ENCODE measurements at regions of chr1 and their contacts with region 1.

Region 1: DNA sequence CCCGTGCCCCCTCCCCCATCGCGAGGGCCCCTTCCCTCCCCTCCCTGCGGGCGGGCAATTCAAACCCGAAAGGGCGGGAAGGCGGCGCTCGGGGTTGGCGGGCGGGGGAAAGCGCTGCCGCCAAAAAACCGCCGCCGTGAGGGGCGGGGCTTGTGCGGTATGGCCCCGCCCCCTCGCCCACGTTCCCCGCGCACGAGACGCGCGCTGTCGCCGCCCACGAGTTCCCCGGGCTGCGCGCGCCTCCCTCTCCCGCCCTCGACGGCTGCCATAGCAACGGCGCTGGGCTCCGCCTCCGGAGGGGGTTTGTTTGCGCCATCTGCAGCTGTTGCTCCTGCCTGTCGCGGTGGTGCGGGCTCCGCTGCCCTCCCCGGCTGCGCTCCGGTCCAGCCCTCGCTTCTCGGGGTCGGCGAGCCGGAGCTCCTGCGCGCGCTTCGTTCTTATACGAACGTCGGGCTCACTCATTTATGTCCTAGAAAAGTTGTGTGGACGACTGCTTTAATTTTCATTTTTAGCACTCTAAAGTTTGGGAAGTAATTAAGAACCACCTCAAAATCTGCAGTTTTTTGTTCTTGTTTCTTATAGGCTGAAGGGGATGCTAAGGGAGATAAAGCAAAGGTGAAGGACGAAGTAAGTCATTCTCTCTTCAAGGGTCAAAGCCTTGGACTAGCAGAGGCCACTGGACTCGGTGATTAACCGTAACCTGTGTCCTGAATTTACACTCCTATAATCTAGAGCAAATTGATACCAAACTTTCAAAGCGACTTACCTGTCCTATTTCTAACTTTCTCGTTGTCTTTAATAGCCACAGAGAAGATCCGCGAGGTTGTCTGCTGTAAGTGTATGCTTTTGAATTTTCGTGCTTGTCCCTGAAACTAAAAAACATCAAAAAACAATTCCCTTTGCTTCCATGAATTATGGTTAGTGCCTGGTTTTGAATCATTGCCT is 933 bp downstream of the HMGN2 start:
- DNase-seq: peak; percentile 95
- H3K4me3 Mint-ChIP-seq: peak overlapping the region; percentile 89
- H3K27ac Mint-ChIP-seq: peak overlapping the region; percentile 53
- H3K4me1 Mint-ChIP-seq: peaks cover 64% of the 10 kb centered on the region
- H3K27me3 Mint-ChIP-seq: no peaks in the 10 kb centered on the region

Region 2: GRCh38 chr1:25168200-25169071 is 1304.7 kb before region 1 on chr1:
- intact Hi-C with region 1: no loop called
- DNase-seq: no peak
- H3K4me3 Mint-ChIP-seq: no peak overlapping the region
- H3K27ac Mint-ChIP-seq: no peak overlapping the region
- H3K4me1 Mint-ChIP-seq: no peaks in the 10 kb centered on the region
- H3K27me3 Mint-ChIP-seq: peaks cover 6% of the 10 kb centered on the region

Region 3: GRCh38 chr1:26111530-26112406 is 361.4 kb before region 1 on chr1 and contains the start of gene PDIK1L:
- intact Hi-C with region 1: loop called (anchors 1 kb)
- DNase-seq: peak; percentile 91
- H3K4me3 Mint-ChIP-seq: peak within 1 kb of the TSS; percentile 96
- H3K27ac Mint-ChIP-seq: peak within 1 kb of the TSS; percentile 92
- H3K4me1 Mint-ChIP-seq: peaks cover 36% of the 10 kb centered on the region
- H3K27me3 Mint-ChIP-seq: no peaks in the 10 kb centered on the region
- total RNA-seq, gene PDIK1L: 15.5 and 18.9 TPM in 2 replicates

Region 4: DNA sequence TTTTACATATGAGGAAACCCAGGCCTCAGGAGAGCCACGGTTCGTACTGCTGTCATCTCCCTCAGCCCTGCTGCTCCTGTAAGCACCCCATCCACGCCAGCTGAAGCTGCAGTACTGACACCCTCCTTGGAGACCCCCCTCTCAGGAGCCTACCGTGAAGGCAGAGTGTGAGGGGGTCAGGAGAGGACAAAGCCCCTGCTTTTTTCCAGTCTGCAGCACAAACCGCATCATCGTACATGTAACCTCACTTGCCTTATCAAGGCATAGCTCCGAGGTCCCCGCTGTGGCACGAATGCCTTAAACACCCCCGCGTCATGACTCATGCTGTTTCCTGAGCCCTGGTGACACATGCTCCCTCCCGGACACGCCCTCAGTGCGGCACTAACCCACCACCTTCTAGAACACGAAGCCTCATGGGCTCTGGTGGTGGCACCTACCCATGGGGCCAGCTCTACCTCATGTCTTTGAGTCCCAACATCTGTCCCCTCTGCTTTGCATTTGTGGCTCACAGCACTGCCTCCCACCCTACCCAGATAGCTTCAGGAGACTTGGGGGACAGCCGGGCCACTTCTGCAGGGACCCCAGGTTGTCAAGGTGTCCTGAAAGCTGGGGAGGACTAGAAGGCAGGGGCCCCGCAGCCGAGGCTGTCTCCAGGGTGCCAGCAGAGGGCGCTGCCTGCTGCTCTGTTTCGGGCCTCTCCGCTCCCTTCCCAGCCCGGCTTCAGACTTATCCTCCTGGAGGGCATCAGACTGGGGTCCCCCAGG is 188.4 kb before region 1 on chr1:
- intact Hi-C with region 1: loop called (anchors 1 kb)
- DNase-seq: peak; percentile 88
- H3K4me3 Mint-ChIP-seq: peak overlapping the region; percentile 81
- H3K27ac Mint-ChIP-seq: peak overlapping the region; percentile 97
- H3K4me1 Mint-ChIP-seq: peaks cover 70% of the 10 kb centered on the region
- H3K27me3 Mint-ChIP-seq: no peaks in the 10 kb centered on the region

Region 5: DNA sequence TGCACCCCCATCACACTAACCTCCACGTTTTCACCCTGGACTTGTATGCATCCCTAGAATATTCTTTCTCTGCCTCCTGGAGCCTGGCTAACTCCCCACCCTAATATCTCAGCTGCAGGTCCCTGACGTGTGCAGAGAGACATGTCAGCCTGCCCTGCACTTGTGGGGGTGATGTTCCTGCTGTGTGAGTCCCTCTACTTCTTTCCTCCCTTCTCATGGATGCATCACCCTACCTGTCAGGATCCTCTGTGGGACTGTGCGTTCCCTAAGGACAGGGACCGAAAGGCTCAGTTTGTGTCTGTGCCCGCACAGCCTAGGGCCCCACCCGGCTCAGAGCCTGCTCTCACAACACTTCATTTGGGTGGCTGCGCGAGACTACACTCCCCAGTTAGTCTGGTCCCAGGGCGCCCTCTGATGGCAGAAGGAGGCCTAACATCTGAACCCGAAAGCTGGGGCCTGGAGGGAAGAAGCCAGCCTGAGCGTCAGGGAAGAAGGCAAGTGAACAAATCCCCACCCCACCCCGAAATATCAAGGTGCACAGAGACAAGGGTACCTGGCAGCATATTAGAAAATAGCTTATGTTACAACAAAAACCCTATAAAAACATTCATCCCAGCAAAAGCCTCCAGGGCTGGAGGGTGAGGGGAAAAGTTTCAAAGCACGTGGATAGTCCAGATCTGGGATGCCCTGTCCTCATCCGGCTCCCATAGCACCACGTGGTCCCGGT is 151.7 kb before region 1 on chr1:
- intact Hi-C with region 1: loop called (anchors 1 kb)
- DNase-seq: peak; percentile 88
- H3K4me3 Mint-ChIP-seq: peak overlapping the region; percentile 85
- H3K27ac Mint-ChIP-seq: peak overlapping the region; percentile 94
- H3K4me1 Mint-ChIP-seq: peaks cover 55% of the 10 kb centered on the region
- H3K27me3 Mint-ChIP-seq: no peaks in the 10 kb centered on the region

Region 6: DNA sequence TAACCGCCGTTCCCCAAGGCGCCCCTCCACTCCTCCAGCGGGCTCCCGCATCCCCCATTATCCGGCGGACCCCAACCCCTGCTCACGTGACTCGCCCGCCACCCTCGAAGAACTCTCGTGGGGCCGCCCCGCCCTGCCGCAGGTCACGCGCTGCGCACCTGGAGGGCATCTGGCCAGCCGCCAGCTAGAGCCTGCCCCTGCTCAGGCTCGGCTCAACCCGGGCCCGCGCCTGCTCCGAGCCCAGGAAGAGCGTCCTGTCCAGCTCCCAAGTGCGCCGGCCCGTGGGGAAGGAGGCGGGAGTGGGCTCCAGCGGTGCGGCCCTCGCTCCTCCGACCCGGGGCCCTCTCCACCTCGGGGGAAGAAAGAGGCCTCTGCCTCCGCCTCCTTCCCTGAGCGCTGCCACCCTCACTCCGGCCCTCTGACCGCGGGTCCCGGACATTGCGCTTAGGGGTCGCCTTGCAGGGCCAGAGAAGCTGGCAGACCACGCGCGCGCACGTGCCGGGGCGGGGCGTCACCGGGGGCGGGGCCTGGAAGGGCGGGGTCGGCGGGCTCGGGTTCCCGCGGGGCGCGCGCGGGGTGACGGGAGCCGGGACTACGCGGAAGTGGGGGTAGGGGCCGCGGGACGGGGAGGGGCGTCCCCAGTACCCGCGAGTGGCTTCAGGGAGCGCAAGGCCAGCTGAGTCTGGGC is 27.5 kb after region 1 on chr1:
- intact Hi-C with region 1: loop called (anchors 1 kb)
- DNase-seq: peak; percentile 84
- H3K4me3 Mint-ChIP-seq: peak overlapping the region; percentile 90
- H3K27ac Mint-ChIP-seq: peak overlapping the region; percentile 91
- H3K4me1 Mint-ChIP-seq: peaks cover 18% of the 10 kb centered on the region
- H3K27me3 Mint-ChIP-seq: no peaks in the 10 kb centered on the region

Region 7: DNA sequence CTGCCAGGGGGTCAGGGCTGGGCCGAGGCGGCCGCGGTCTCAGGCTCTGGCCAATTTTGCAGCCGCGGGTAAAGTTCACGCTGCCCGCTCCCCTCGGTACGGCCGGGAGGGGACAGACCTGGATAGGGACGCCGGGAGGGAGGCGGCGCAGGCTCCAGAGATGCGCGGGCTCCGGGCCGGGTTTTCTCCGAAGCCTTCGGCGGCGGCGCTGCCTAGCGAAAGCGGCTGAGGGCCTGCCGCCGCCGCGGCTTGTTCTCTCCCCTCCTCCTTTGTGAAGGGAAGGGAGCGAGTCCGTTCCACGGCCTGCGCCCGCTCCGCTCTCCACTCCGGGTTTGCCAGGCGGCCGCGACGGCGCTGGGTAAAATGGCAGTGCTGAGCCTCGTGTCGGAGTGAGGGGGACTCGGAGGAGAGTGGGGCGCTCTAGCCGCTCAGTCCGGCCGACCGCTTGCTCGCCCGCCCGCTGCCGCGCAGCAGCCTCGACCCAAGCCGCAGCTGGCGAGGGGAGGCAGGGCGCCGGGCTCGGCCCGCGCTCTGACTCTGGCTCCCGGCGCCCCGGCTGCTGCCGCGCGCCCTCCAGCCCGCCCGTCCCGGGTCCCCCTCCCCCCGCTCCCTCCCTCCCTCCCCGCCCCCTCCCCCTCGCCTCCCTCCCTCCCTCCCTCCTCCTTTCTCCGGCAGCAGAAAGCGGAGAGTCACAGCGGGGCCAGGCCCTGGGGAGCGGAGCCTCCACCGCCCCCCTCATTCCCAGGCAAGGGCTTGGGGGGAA is 222.4 kb after region 1 on chr1 and contains the start of gene ARID1A:
- intact Hi-C with region 1: loop called (anchors 2 kb)
- DNase-seq: peak; percentile 96
- H3K4me3 Mint-ChIP-seq: peak within 1 kb of the TSS; percentile 90
- H3K27ac Mint-ChIP-seq: peak within 1 kb of the TSS; percentile 96
- H3K4me1 Mint-ChIP-seq: peaks cover 31% of the 10 kb centered on the region
- H3K27me3 Mint-ChIP-seq: no peaks in the 10 kb centered on the region
- total RNA-seq, gene ARID1A: 130 and 132 TPM in 2 replicates

Region 8: GRCh38 chr1:26771643-26772321 is 298.6 kb after region 1 on chr1:
- intact Hi-C with region 1: no loop called
- DNase-seq: no peak
- H3K4me3 Mint-ChIP-seq: no peak overlapping the region
- H3K27ac Mint-ChIP-seq: peak overlapping the region; percentile 64
- H3K4me1 Mint-ChIP-seq: peaks cover 40% of the 10 kb centered on the region
- H3K27me3 Mint-ChIP-seq: no peaks in the 10 kb centered on the region

Region 9: GRCh38 chr1:26864610-26865527 is 391.7 kb after region 1 on chr1:
- intact Hi-C with region 1: loop called (anchors 10 kb)
- DNase-seq: peak; percentile 96
- H3K4me3 Mint-ChIP-seq: peak overlapping the region; percentile 98
- H3K27ac Mint-ChIP-seq: peak overlapping the region; percentile 98
- H3K4me1 Mint-ChIP-seq: peaks cover 32% of the 10 kb centered on the region
- H3K27me3 Mint-ChIP-seq: no peaks in the 10 kb centered on the region

Measured in activated T-helper 1 cell treated with anti-CD3 and anti-CD28 coated beads, Interleukin-12 subunit alpha, Interleukin-12 subunit beta, Interleukin-2, Interleukin-4 antibody, amounts not matched to agents 30 ng/mL and 10 ng/mL and 1 ng/mL, durations not matched to agents 14 hours and 24 hours and 36 hours (primary cell).